ENCODE measurements at regions of chr3 and their contacts with region 1.

Region 1: DNA sequence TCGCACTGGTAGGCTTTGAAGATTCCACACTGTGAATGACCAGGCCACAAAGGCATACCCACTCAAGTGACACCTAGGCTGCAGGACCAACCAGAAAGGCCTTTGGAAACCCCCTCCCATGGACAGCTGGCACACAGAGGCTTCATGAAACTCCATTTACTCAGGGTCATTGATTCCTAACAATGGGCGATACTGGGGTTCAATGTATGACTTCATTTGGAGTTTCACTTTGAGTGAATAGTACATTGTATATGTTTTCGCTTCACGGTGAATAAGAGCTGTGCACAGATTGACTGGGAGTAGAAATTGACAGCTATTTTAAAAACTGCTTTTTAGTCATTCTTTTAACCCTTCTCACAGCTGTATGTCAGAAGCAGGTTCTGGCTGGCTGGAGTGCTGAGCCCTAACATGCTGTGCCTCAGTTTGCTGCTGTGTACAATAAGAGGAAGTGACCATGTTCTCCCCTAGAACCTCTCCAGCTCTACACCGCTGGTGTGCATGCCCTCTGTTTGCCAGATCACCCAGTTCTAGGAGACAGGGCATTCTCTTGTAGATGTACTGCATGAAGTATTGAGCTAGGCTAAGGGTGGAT is 15.4 kb upstream of the CX3CR1 start:
- DNase-seq: no peak
- H3K4me3 Mint-ChIP-seq: no peak overlapping the region
- H3K27ac Mint-ChIP-seq: peak overlapping the region; percentile 33
- H3K4me1 Mint-ChIP-seq: peaks cover 37% of the 10 kb centered on the region
- H3K27me3 Mint-ChIP-seq: peaks cover under 1% of the 10 kb centered on the region

Region 2: DNA sequence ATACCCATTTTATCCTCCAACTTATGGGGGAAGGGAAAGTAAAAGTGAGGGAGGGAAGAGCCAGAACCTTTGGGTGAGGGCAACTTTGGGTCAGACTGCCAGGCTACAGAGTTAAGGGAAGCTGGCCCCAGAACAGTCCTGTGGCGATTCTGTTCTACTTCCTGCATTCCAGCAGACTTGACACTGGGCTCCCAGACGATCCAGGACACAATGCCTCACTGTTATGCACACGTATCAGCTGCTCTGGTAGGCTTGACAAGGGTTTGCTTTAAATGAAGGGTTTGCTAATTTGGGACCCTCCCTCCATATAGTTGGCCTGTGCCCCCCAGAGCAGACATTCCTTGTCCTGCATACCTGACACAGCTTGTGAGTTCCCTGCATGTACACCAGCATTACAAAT is 198.5 kb before region 1 on chr3:
- intact Hi-C with region 1: no loop called
- DNase-seq: no peak
- H3K4me3 Mint-ChIP-seq: no peak overlapping the region
- H3K27ac Mint-ChIP-seq: no peak overlapping the region
- H3K4me1 Mint-ChIP-seq: peaks cover 3% of the 10 kb centered on the region
- H3K27me3 Mint-ChIP-seq: no peaks in the 10 kb centered on the region

Region 3: GRCh38 chr3:39317571-39318169 is 22.4 kb after region 1 on chr3:
- intact Hi-C with region 1: loop called (anchors 2 kb)
- DNase-seq: no peak
- H3K4me3 Mint-ChIP-seq: no peak overlapping the region
- H3K27ac Mint-ChIP-seq: no peak overlapping the region
- H3K4me1 Mint-ChIP-seq: peaks cover 58% of the 10 kb centered on the region
- H3K27me3 Mint-ChIP-seq: peaks cover 1% of the 10 kb centered on the region

Region 4: DNA sequence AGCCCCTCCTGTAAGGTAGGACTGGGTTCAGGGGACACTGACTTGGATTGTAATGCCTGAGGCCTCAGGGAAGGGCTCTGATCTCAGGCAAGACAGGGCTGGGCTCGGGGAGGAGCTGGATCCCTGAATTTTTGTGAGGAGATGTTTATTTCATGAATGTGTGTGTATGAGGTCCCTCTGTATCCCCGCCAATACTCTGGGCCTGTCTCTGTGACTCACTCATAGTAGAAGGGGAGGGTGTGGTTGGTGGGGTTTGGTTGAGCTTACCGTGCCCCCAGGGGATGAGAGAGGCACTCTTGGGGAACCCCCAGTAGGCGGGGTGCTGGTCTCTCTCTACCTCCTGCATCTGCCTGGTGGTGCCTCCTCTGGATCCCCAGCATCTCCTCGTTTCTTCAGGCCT is 139.3 kb after region 1 on chr3:
- intact Hi-C with region 1: no loop called
- DNase-seq: no peak
- H3K4me3 Mint-ChIP-seq: no peak overlapping the region
- H3K27ac Mint-ChIP-seq: no peak overlapping the region
- H3K4me1 Mint-ChIP-seq: no peaks in the 10 kb centered on the region
- H3K27me3 Mint-ChIP-seq: peaks cover 4% of the 10 kb centered on the region